ENCODE measurements at regions of chr11 and their contacts with region 1.

Region 1: GRCh38 chr11:123478352-123478987 is 48.4 kb downstream of the GRAMD1B start:
- DNase-seq: peak; percentile 53
- H3K4me3 Mint-ChIP-seq: no peak overlapping the region
- H3K27ac Mint-ChIP-seq: no peak overlapping the region
- H3K4me1 Mint-ChIP-seq: peaks cover 32% of the 10 kb centered on the region
- H3K27me3 Mint-ChIP-seq: no peaks in the 10 kb centered on the region

Region 2: GRCh38 chr11:122981388-122982264 is 496.8 kb before region 1 on chr11 and contains the start of gene BSX:
- CTCF ChIA-PET with region 1: no interaction called
- DNase-seq: peak; percentile 77
- H3K4me3 Mint-ChIP-seq: no peak within 1 kb of the TSS
- H3K27ac Mint-ChIP-seq: peak within 1 kb of the TSS; percentile 25
- H3K4me1 Mint-ChIP-seq: peaks cover 27% of the 10 kb centered on the region
- H3K27me3 Mint-ChIP-seq: peaks cover 96% of the 10 kb centered on the region

Region 3: GRCh38 chr11:123438191-123438627 is 40.3 kb before region 1 on chr11:
- CTCF ChIA-PET with region 1: interaction called, 10 read pairs
- DNase-seq: no peak
- H3K4me3 Mint-ChIP-seq: no peak overlapping the region
- H3K27ac Mint-ChIP-seq: peak overlapping the region; percentile 62
- H3K4me1 Mint-ChIP-seq: peaks cover 86% of the 10 kb centered on the region
- H3K27me3 Mint-ChIP-seq: no peaks in the 10 kb centered on the region

Region 4: DNA sequence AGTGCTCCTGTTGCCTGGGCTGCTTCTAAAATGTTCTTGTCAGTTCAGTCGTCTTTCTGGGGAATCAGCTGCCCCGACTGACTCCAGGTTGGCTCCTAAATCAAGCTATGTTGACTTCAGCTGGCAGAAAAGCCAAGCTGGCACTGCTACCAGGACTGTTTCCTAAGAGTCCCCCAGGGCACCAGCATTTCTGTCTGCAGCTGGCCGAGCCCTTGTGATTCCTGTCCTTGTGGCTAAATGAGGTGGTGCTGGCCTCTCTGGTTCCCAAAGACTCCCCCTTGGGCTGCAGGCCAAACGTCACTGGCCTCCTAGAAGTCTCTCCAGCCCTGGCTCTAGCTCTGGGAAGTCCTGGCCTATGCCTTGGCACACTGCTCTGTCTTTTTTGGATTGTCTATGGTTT is 17.3 kb before region 1 on chr11:
- CTCF ChIA-PET with region 1: interaction called, 12 read pairs
- DNase-seq: no peak
- H3K4me3 Mint-ChIP-seq: no peak overlapping the region
- H3K27ac Mint-ChIP-seq: no peak overlapping the region
- H3K4me1 Mint-ChIP-seq: peaks cover 37% of the 10 kb centered on the region
- H3K27me3 Mint-ChIP-seq: no peaks in the 10 kb centered on the region

Measured in activated naive CD4-positive, alpha-beta T cell treated with anti-CD3 and anti-CD28 coated beads, Interleukin-2, amount 10 ng/mL, durations not matched to agents 7 days and 5 days (primary cell).